CD4-positive, alpha-beta T cell (primary cell): ENCODE measurements at regions of chr15 and their contacts with region 1.

Region 1: DNA sequence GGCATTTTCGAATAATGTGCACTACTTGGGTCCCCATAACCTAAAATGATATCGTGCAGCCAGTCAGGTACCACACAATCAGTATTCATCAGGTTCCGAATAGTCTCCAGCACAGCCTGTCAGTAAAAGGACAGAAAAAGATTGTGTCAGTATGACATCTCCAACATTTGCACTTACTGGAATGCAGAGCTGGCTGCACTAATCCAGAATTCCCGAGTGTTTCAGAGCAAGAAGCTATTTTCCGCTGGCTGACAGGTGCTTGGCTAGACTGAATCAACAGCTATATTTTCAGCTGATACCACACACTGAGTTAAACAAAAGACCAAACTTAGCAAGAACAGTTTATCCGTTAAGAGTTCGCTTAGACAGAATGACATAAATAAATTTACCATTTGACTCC is 68.8 kb downstream of the AQR start:
- DNase-seq: no peak
- ATAC-seq: no peak
- H3K4me3 ChIP-seq: no peak overlapping the region
- H3K4me3 Mint-ChIP-seq: no peak overlapping the region
- H3K27ac ChIP-seq: no peak overlapping the region
- H3K27ac Mint-ChIP-seq: no peak overlapping the region
- H3K4me1 ChIP-seq: no peaks in the 10 kb centered on the region
- H3K4me1 Mint-ChIP-seq: no peaks in the 10 kb centered on the region
- H3K27me3 ChIP-seq: no peaks in the 10 kb centered on the region
- H3K27me3 Mint-ChIP-seq: no peaks in the 10 kb centered on the region
- CTCF ChIP-seq: no peak

Region 2: GRCh38 chr15:34841262-34841725 is 59.5 kb before region 1 on chr15:
- CTCF ChIA-PET with region 1: no interaction called
- POLR2A ChIA-PET with region 1: no interaction called
- intact Hi-C with region 1: loop called in 1 of 2 experiments (anchors 10 kb)
- DNase-seq: no peak
- ATAC-seq: no peak
- H3K4me3 ChIP-seq: no peak overlapping the region
- H3K4me3 Mint-ChIP-seq: no peak overlapping the region
- H3K27ac ChIP-seq: no peak overlapping the region
- H3K27ac Mint-ChIP-seq: no peak overlapping the region
- H3K4me1 ChIP-seq: no peaks in the 10 kb centered on the region
- H3K4me1 Mint-ChIP-seq: no peaks in the 10 kb centered on the region
- H3K27me3 ChIP-seq: peaks cover 0 to 5% of the 10 kb centered on the region in 2 experiments
- H3K27me3 Mint-ChIP-seq: no peaks in the 10 kb centered on the region
- CTCF ChIP-seq: no peak

Region 3: DNA sequence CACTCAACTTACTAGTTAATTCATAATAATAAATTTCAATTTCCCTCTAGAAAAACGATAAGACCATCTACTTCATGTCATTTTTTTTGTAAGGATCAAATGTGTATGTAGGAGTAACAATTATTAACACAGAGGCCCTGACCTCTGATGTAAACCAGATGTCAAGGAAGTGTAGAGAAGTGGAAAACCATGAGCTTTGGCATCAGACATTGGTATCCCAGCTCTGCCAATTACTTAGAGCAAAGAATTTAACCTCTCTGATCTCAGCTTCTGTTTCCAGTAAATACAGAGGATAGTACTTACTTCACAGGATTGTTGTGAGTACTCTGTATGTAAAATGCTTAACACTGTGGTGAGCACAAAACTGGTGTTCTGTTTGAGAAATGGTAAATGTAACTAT is 51.2 kb after region 1 on chr15:
- CTCF ChIA-PET with region 1: no interaction called
- POLR2A ChIA-PET with region 1: no interaction called
- intact Hi-C with region 1: loop called in 1 of 2 experiments (anchors 10 kb)
- DNase-seq: no peak
- ATAC-seq: no peak
- H3K4me3 ChIP-seq: no peak overlapping the region
- H3K4me3 Mint-ChIP-seq: no peak overlapping the region
- H3K27ac ChIP-seq: no peak overlapping the region
- H3K27ac Mint-ChIP-seq: no peak overlapping the region
- H3K4me1 ChIP-seq: no peaks in the 10 kb centered on the region
- H3K4me1 Mint-ChIP-seq: peaks cover 5% of the 10 kb centered on the region
- H3K27me3 ChIP-seq: no peaks in the 10 kb centered on the region
- H3K27me3 Mint-ChIP-seq: no peaks in the 10 kb centered on the region
- CTCF ChIP-seq: no peak